ENCODE measurements at regions of chrX and their contacts with region 1.

Region 1: GRCh38 chrX:51336584-51336983 is 4.0 kb downstream of the NUDT10 start:
- DNase-seq: no peak
- H3K4me3 ChIP-seq: no peak overlapping the region
- H3K27ac ChIP-seq: no peak overlapping the region
- H3K4me1 ChIP-seq: peaks cover 0 to 3% (median 0%) of the 10 kb centered on the region in 4 donors
- H3K27me3 ChIP-seq: no peaks in the 10 kb centered on the region
- CTCF ChIP-seq: peak; percentile 47 to 54 (median 53)
- EP300 ChIP-seq: no peak
- POLR2A ChIP-seq: no peak

Region 2: DNA sequence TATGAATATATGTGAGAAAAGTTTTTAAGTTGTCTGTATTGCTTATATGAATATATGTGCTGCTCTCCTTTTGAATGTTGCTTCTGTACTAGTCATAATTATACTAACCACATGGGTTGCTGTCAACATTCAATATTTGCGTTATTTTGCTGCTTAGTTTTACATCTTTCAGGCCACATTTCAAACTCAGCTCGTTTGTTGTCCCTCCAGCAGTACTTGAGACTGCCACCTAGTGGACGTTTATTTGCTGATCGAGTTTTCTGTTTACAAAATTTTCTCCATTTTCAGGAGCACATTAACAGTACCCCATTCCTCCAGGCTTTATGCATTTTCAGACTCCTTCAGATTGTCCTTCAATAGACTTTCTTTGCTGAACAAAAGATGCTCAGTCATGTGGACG is 84.0 kb after region 1 on chrX:
- intact Hi-C with region 1: loop called (anchors 5 kb)
- DNase-seq: no peak
- H3K4me3 ChIP-seq: no peak overlapping the region
- H3K27ac ChIP-seq: no peak overlapping the region
- H3K4me1 ChIP-seq: no peaks in the 10 kb centered on the region
- H3K27me3 ChIP-seq: no peaks in the 10 kb centered on the region
- CTCF ChIP-seq: peak; percentile 43 to 71 (median 62)
- EP300 ChIP-seq: no peak
- POLR2A ChIP-seq: no peak